WTC11 (cell line): ENCODE measurements at regions of chr7 and their contacts with region 1.

Region 1: GRCh38 chr7:149854611-149855360 is 16.6 kb downstream of the ZNF862 start:
- DNase-seq: peak; percentile 64
- ATAC-seq: peak; percentile 78
- H3K4me3 Mint-ChIP-seq: peak overlapping the region; percentile 46
- H3K27ac Mint-ChIP-seq: peak overlapping the region; percentile 58; the same call in 1 of the 2 replicates
- H3K4me1 Mint-ChIP-seq: peaks cover 32% of the 10 kb centered on the region
- H3K27me3 Mint-ChIP-seq: no peaks in the 10 kb centered on the region
- CTCF ChIP-seq: no peak

Region 2: DNA sequence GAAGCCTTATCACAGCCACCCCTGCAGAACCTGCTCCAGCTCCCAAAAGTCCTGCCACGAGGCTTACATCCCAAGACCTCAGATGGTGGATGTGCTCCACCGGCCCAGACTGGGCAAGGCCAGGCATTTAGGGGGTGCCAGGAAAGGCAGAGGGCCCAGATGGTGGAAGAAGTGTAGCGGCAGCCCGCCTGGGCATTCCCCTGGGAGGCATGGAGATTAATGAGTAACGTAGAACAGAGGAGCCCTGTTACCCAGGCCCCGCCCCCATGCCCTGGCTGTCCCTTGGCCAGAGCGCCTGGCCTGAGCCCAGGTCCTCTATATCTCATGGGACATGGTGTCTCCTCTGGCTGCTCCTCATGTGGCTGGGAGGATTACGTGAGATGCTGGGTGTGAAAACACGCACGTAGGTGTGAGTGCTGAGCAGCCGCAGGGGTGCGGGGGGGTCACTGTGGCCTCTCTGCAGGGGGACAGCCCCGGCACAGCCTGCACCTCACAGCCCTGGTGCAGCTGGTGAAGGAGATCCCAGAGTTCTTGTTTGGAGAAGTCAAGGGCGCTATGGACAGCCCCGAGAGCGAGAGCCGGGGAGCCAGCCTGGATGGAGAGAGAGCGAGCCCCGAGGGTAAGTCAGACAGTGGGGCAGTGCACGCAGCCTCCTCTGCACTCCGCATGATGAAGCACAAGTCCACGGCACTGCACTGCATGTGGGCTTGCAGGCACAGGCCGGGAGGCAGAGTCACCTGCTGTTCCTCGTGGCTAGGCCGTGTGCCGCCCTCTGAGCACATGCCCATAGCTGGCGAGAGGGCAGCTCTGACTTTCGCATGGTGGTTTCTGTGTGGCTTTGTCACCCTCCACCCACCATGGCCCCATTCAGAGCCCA is 134.2 kb before region 1 on chr7:
- CTCF ChIA-PET with region 1: no interaction called
- POLR2A ChIA-PET with region 1: no interaction called
- DNase-seq: no peak
- ATAC-seq: no peak
- H3K4me3 Mint-ChIP-seq: no peak overlapping the region
- H3K27ac Mint-ChIP-seq: no peak overlapping the region
- H3K4me1 Mint-ChIP-seq: peaks cover 6% of the 10 kb centered on the region
- H3K27me3 Mint-ChIP-seq: no peaks in the 10 kb centered on the region
- CTCF ChIP-seq: no peak

Region 3: GRCh38 chr7:149790146-149790548 is 64.6 kb before region 1 on chr7:
- CTCF ChIA-PET with region 1: interaction called, 13 read pairs
- POLR2A ChIA-PET with region 1: interaction called, 3 read pairs
- DNase-seq: peak; percentile 78
- ATAC-seq: peak; percentile 68
- H3K4me3 Mint-ChIP-seq: peak overlapping the region; percentile 64
- H3K27ac Mint-ChIP-seq: no peak overlapping the region
- H3K4me1 Mint-ChIP-seq: peaks cover 7% of the 10 kb centered on the region; the same call in 1 of the 2 replicates
- H3K27me3 Mint-ChIP-seq: peaks cover 47% of the 10 kb centered on the region
- CTCF ChIP-seq: peak; percentile 60

Region 4: DNA sequence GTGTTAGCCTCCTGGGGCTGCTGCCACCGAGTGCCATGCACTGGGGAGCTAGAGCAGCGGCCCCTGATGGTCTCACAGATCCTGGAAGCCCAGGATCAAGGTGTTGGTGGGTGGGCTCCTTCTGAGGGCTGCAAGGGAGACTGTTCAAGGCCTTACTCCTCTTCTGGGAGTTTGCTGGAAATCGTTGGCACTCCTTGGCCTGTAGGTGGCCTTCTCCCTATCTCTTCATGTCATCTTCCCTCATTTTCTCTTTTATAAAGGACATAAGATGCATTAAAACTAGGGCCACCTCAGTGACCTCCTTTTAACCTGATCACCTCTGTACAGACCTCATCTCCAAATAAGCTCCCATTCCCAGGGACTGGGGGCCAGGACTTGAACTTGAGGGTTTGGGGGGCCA is 43.6 kb before region 1 on chr7:
- CTCF ChIA-PET with region 1: interaction called, 114 read pairs
- POLR2A ChIA-PET with region 1: no interaction called
- DNase-seq: no peak
- ATAC-seq: peak; percentile 58
- H3K4me3 Mint-ChIP-seq: no peak overlapping the region
- H3K27ac Mint-ChIP-seq: no peak overlapping the region
- H3K4me1 Mint-ChIP-seq: no peaks in the 10 kb centered on the region
- H3K27me3 Mint-ChIP-seq: no peaks in the 10 kb centered on the region
- CTCF ChIP-seq: no peak

Region 5: GRCh38 chr7:149832332-149833041 is 22.3 kb before region 1 on chr7:
- CTCF ChIA-PET with region 1: interaction called, 16 read pairs
- POLR2A ChIA-PET with region 1: no interaction called
- DNase-seq: peak; percentile 10
- ATAC-seq: peak; percentile 20
- H3K4me3 Mint-ChIP-seq: no peak overlapping the region
- H3K27ac Mint-ChIP-seq: no peak overlapping the region
- H3K4me1 Mint-ChIP-seq: peaks cover 13% of the 10 kb centered on the region
- H3K27me3 Mint-ChIP-seq: peaks cover 9% of the 10 kb centered on the region
- CTCF ChIP-seq: no peak

Region 6: GRCh38 chr7:149883452-149883861 is 28.7 kb after region 1 on chr7:
- CTCF ChIA-PET with region 1: interaction called, 52 read pairs
- POLR2A ChIA-PET with region 1: no interaction called
- DNase-seq: peak; percentile 78
- ATAC-seq: peak; percentile 85
- H3K4me3 Mint-ChIP-seq: no peak overlapping the region
- H3K27ac Mint-ChIP-seq: no peak overlapping the region
- H3K4me1 Mint-ChIP-seq: peaks cover 17% of the 10 kb centered on the region
- H3K27me3 Mint-ChIP-seq: no peaks in the 10 kb centered on the region
- CTCF ChIP-seq: peak; percentile 61